ENCODE measurements at regions of chr6 and their contacts with region 1.

Region 1: DNA sequence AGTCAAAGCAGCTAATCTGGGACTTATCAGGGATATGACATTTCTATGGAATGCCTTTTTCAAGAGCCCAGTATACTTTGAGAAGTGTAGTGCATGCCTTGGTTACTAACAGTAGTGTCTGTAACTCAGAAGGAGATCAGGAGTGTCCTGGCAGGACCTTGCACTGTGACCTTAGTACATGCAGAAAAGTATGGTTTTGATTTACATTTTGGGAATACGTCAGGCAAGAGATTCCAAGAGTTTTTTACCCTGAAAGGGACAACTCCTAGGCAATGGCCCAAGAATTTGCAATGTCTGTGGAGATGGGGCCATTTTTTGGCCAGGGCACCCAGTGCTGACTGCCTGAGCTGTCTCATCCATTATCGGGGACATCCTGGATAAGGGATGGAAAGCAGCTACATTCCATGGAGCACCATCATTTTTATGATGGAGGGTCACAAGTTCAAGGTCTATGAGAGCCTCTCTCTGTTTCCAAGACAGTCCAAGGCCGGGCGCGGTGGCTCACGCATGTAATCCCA is 80.2 kb downstream of the FAM50B start:
- DNase-seq: peak; percentile 96
- H3K4me3 ChIP-seq: no peak overlapping the region
- CTCF ChIP-seq: no peak

Region 2: GRCh38 chr6:3868544-3868943 is 60.8 kb before region 1 on chr6:
- CTCF ChIA-PET with region 1: no interaction called
- POLR2A ChIA-PET with region 1: no interaction called
- DNase-seq: no peak
- H3K4me3 ChIP-seq: no peak overlapping the region
- CTCF ChIP-seq: no peak

Region 3: GRCh38 chr6:3943331-3943765 is 14.0 kb after region 1 on chr6:
- CTCF ChIA-PET with region 1: interaction called, 12 read pairs
- POLR2A ChIA-PET with region 1: no interaction called
- DNase-seq: no peak
- H3K4me3 ChIP-seq: no peak overlapping the region
- CTCF ChIP-seq: no peak

Region 4: GRCh38 chr6:3962957-3963303 is 33.6 kb after region 1 on chr6:
- CTCF ChIA-PET with region 1: no interaction called
- POLR2A ChIA-PET with region 1: no interaction called
- DNase-seq: no peak
- H3K4me3 ChIP-seq: no peak overlapping the region
- CTCF ChIP-seq: no peak